Activated naive CD4-positive, alpha-beta T cell treated with anti-CD3 and anti-CD28 coated beads for 36 hours (primary cell): ENCODE measurements at regions of chr3 and their contacts with region 1.

Region 1: DNA sequence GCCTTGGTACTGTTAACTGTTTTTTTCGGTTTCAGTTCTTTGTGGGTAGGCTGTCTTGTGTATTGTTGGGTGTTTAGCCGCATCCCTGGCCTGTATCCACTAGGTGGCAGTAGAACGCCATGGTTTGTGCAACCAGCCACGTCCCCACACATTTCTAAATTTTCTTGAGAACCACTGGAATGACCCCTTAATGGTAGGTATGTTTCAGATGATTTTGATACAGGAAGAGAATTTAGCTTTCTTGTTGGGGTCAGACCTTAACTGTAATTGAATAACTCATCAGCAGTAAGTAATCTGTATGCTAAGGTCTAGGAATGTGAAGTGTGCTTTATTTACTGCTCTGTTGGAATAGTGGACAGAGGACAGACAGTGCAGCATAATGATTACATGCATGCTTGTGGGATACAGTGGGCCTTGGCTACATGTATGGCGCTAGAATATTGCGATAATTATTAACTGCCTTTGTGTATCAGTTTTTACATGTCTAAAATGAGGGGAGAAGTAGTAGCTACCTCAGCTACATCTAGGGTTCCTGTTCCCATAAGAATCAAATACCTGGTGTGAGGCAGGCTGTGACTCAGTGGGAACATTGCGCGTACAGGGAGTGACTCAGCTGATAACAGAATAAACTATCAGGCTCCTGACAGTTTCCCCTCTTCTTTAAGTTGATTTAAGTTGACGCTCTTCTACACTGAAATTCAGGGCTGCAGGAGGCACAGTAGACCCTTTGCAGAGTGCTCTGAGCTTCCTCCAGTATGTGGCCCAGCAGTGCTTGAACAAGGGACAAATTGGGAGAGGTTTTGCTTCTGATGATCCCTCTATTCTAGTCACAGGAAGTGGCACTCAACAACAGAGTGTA is 25.0 kb upstream of the GPR171 start:
- DNase-seq: peak; percentile 90
- H3K4me3 Mint-ChIP-seq: no peak overlapping the region
- H3K27ac Mint-ChIP-seq: peak overlapping the region; percentile 62
- H3K4me1 Mint-ChIP-seq: peaks cover 62% of the 10 kb centered on the region
- H3K27me3 Mint-ChIP-seq: no peaks in the 10 kb centered on the region

Region 2: DNA sequence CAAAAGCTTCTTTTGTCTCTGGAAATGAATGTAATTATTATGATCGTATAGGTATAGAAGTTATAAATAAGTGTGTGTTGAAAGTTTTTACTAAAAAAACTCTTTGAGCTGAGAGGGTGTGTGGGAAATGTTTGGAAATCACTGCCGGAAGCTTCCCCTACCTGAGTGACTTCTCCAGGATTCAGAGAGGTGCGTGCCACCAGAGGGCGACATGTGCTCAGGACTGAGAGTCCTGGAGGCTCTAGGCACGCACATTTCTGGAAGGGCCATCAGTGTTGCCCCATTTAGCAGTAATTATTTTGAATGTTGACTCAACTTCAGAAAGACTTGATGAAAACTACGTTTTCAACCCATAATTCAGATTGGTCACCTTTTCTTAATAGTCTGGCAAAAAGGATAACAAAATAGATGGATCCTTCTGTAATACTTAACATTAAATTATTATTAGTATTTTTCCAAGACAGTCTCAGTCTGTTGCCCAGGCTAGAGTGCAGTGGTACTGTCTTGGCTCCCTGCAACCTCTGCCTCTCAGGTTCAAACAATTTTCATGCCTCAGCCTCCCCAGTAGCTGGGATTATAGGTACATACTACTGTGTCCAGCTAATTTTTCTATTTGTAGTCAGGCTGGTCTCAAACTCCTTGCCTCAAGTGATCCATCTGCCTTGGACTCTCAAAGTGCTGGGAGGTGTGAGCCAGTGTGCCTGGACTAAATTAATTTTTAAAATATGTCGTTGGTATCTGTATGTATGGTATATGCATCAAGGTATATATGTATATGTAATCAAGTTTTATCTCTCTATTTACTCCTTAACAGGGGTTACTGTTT is 59.6 kb before region 1 on chr3:
- CTCF ChIA-PET with region 1: interaction called, 124 read pairs
- intact Hi-C with region 1: loop called (anchors 1 kb)
- DNase-seq: peak; percentile 93
- H3K4me3 Mint-ChIP-seq: no peak overlapping the region
- H3K27ac Mint-ChIP-seq: no peak overlapping the region
- H3K4me1 Mint-ChIP-seq: peaks cover 37% of the 10 kb centered on the region
- H3K27me3 Mint-ChIP-seq: no peaks in the 10 kb centered on the region

Region 3: DNA sequence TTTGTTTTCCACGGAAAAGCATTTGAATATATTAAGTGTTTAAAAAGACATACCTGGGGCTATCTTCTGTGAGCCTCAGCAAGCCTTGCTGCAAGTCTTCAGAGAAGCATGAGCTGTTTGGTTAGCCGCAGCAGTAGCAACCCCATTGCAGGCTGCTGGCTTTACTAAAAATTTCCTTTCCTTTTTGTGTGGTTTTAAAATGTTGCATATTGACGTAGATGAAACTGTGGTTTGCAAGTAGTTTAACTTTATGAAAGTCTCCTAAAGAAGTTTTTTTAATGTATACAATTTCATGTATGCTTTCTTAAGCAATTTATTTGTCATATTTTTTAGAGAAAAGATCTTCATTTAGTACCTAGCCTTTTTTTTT is 25.0 kb before region 1 on chr3 and contains the start of gene GPR171:
- CTCF ChIA-PET with region 1: interaction called, 96 read pairs
- intact Hi-C with region 1: no loop called
- DNase-seq: peak; percentile 81
- H3K4me3 Mint-ChIP-seq: peak within 1 kb of the TSS; percentile 94
- H3K27ac Mint-ChIP-seq: peak within 1 kb of the TSS; percentile 100
- H3K4me1 Mint-ChIP-seq: peaks cover 60% of the 10 kb centered on the region
- H3K27me3 Mint-ChIP-seq: no peaks in the 10 kb centered on the region
- total RNA-seq, gene GPR171: 42.8 to 46.9 TPM

Region 4: DNA sequence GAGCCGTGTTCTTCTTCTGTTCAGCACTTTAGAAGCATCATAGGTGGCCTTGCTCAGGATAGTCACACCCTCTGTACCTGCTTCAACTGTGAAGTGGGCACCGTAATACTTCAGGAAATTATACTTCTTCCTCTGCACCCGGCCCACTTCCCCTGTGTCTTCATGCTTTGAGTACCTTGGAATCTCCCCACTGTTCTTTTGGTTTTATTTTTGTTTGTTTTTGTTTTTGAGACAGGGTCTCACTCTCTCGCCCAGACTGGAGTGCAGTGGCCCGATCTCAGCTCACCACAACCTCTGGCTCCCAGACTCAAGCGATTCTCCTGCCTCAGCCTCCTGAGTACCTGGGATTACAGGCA is 48.6 kb after region 1 on chr3:
- CTCF ChIA-PET with region 1: interaction called, 248 read pairs
- intact Hi-C with region 1: loop called (anchors 1 kb)
- DNase-seq: peak; percentile 77
- H3K4me3 Mint-ChIP-seq: peak overlapping the region; percentile 55
- H3K27ac Mint-ChIP-seq: peak overlapping the region; percentile 85
- H3K4me1 Mint-ChIP-seq: peaks cover 39% of the 10 kb centered on the region
- H3K27me3 Mint-ChIP-seq: no peaks in the 10 kb centered on the region

Region 5: GRCh38 chr3:151305101-151305750 is 77.2 kb after region 1 on chr3:
- CTCF ChIA-PET with region 1: interaction called, 17 read pairs
- intact Hi-C with region 1: loop called (anchors 1 kb)
- DNase-seq: peak; percentile 37
- H3K4me3 Mint-ChIP-seq: no peak overlapping the region
- H3K27ac Mint-ChIP-seq: no peak overlapping the region
- H3K4me1 Mint-ChIP-seq: peaks cover 59% of the 10 kb centered on the region
- H3K27me3 Mint-ChIP-seq: peaks cover 18% of the 10 kb centered on the region

Region 6: GRCh38 chr3:151468284-151468917 is 240.4 kb after region 1 on chr3:
- CTCF ChIA-PET with region 1: interaction called, 6 read pairs
- intact Hi-C with region 1: loop called (anchors 1 kb)
- DNase-seq: peak; percentile 40
- H3K4me3 Mint-ChIP-seq: no peak overlapping the region
- H3K27ac Mint-ChIP-seq: no peak overlapping the region
- H3K4me1 Mint-ChIP-seq: no peaks in the 10 kb centered on the region
- H3K27me3 Mint-ChIP-seq: peaks cover 4% of the 10 kb centered on the region

Region 7: GRCh38 chr3:151520105-151520504 is 292.1 kb after region 1 on chr3:
- CTCF ChIA-PET with region 1: no interaction called
- intact Hi-C with region 1: no loop called
- DNase-seq: no peak
- H3K4me3 Mint-ChIP-seq: no peak overlapping the region
- H3K27ac Mint-ChIP-seq: no peak overlapping the region
- H3K4me1 Mint-ChIP-seq: no peaks in the 10 kb centered on the region
- H3K27me3 Mint-ChIP-seq: peaks cover 9% of the 10 kb centered on the region

Region 8: GRCh38 chr3:151918253-151919029 is 690.4 kb after region 1 on chr3:
- CTCF ChIA-PET with region 1: no interaction called
- intact Hi-C with region 1: loop called (anchors 5 kb)
- DNase-seq: no peak
- H3K4me3 Mint-ChIP-seq: no peak overlapping the region
- H3K27ac Mint-ChIP-seq: no peak overlapping the region
- H3K4me1 Mint-ChIP-seq: no peaks in the 10 kb centered on the region
- H3K27me3 Mint-ChIP-seq: no peaks in the 10 kb centered on the region